AG04450 (cell line): ENCODE measurements at regions of chr11 and their contacts with region 1.

Region 1: GRCh38 chr11:79253280-79253679 is 187.6 kb downstream of the TENM4 start:
- DNase-seq: no peak
- H3K4me3 ChIP-seq: no peak overlapping the region
- H3K27ac ChIP-seq: no peak overlapping the region
- H3K27me3 ChIP-seq: no peaks in the 10 kb centered on the region
- CTCF ChIP-seq: no peak

Region 2: DNA sequence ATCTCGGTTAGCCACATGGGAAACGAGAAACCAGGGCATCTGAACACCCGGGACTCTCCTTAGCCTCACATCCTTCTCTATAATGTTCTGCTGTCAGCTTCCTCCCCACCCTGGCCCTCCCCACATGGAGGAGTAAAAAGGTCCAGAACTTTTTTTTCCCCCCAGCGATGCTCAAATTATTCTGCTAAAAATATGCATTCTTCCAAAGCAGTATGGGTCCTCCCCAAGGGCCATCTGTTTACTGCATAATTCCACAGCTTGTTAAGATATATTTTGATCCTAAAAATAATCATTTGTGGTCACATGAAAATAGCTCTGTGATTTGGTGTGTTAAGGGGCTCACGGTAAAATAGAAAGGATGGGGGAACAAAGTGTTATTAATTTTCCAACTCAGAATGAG is 397.1 kb before region 1 on chr11:
- CTCF ChIA-PET with region 1: interaction called, 13 read pairs
- POLR2A ChIA-PET with region 1: no interaction called
- DNase-seq: no peak
- H3K4me3 ChIP-seq: no peak overlapping the region
- H3K27ac ChIP-seq: no peak overlapping the region
- H3K27me3 ChIP-seq: peaks cover 2% of the 10 kb centered on the region
- CTCF ChIP-seq: no peak

Region 3: DNA sequence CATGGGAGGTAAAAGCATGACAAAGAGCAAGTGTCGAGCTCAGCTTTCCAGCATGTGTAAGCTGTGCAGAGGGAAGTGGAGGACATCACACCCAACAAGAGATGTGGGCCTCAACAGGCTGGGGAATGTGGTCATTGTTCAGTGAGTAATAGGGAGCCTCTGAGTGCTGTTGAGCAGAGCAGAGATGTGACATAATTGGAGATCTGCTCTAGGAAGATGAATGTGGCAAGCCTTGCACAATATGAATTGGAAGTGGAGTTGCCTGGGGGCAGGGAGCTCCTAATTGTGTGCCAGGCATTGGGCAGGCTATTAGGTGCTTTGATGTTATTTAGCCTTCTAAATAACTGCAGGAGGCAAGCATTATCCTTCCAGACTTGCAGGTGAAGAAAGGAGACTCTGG is 34.1 kb before region 1 on chr11:
- CTCF ChIA-PET with region 1: no interaction called
- POLR2A ChIA-PET with region 1: no interaction called
- DNase-seq: no peak
- H3K4me3 ChIP-seq: no peak overlapping the region
- H3K27ac ChIP-seq: no peak overlapping the region
- H3K27me3 ChIP-seq: no peaks in the 10 kb centered on the region
- CTCF ChIP-seq: no peak